ENCODE measurements at regions of chr3 and their contacts with region 1.

Region 1: GRCh38 chr3:169149349-169149890 is 514.1 kb downstream of the MECOM start:
- DNase-seq: peak; percentile 80 to 89
- H3K4me3 ChIP-seq: peak overlapping the region; percentile 29
- H3K4me3 Mint-ChIP-seq: peak overlapping the region; percentile 84
- H3K27ac Mint-ChIP-seq: no peak overlapping the region
- H3K4me1 ChIP-seq: no peaks in the 10 kb centered on the region
- H3K4me1 Mint-ChIP-seq: peaks cover 11% of the 10 kb centered on the region
- H3K27me3 ChIP-seq: no peaks in the 10 kb centered on the region
- H3K27me3 Mint-ChIP-seq: no peaks in the 10 kb centered on the region
- CTCF ChIP-seq: peak; percentile 81 to 87

Region 2: GRCh38 chr3:168952551-168952950 is 196.9 kb before region 1 on chr3:
- CTCF ChIA-PET with region 1: no interaction called
- POLR2A ChIA-PET with region 1: no interaction called
- intact Hi-C with region 1: loop called (anchors 5 kb)
- DNase-seq: no peak
- H3K4me3 ChIP-seq: no peak overlapping the region
- H3K4me3 Mint-ChIP-seq: no peak overlapping the region
- H3K27ac Mint-ChIP-seq: no peak overlapping the region
- H3K4me1 ChIP-seq: peaks cover 14% of the 10 kb centered on the region
- H3K4me1 Mint-ChIP-seq: peaks cover 8% of the 10 kb centered on the region
- H3K27me3 ChIP-seq: no peaks in the 10 kb centered on the region
- H3K27me3 Mint-ChIP-seq: no peaks in the 10 kb centered on the region
- CTCF ChIP-seq: no peak

Region 3: GRCh38 chr3:169218314-169218983 is 69.0 kb after region 1 on chr3:
- CTCF ChIA-PET with region 1: interaction called, 11 read pairs
- POLR2A ChIA-PET with region 1: no interaction called
- intact Hi-C with region 1: loop called (anchors 5 kb)
- DNase-seq: peak; percentile 67
- H3K4me3 ChIP-seq: no peak overlapping the region
- H3K4me3 Mint-ChIP-seq: no peak overlapping the region
- H3K27ac Mint-ChIP-seq: no peak overlapping the region
- H3K4me1 ChIP-seq: no peaks in the 10 kb centered on the region
- H3K4me1 Mint-ChIP-seq: no peaks in the 10 kb centered on the region
- H3K27me3 ChIP-seq: no peaks in the 10 kb centered on the region
- H3K27me3 Mint-ChIP-seq: no peaks in the 10 kb centered on the region
- CTCF ChIP-seq: peak; percentile 51 to 79

Region 4: DNA sequence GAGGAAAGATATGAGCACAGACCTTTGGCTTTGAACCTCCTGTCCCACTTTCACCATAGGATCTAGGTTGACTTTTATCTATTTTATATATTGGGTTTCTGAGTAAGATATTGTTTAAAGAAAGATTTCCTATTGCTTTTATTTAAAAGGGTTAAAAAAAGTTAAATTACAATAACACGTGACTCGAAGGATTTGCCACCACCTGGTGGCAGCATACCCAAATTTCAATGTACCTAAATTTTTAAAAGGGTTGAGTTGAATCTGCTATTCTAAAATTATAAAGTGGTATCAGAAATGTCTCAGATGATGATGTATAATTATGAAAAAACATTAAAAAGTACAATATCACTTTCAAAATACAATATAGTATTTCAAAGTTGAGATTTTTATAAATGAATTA is 145.7 kb after region 1 on chr3:
- CTCF ChIA-PET with region 1: interaction called, 4 read pairs
- POLR2A ChIA-PET with region 1: no interaction called
- intact Hi-C with region 1: loop called (anchors 1 kb)
- DNase-seq: peak in 1 of 2 experiments; percentile 23
- H3K4me3 ChIP-seq: no peak overlapping the region
- H3K4me3 Mint-ChIP-seq: no peak overlapping the region
- H3K27ac Mint-ChIP-seq: no peak overlapping the region
- H3K4me1 ChIP-seq: no peaks in the 10 kb centered on the region
- H3K4me1 Mint-ChIP-seq: peaks cover 23% of the 10 kb centered on the region
- H3K27me3 ChIP-seq: no peaks in the 10 kb centered on the region
- H3K27me3 Mint-ChIP-seq: no peaks in the 10 kb centered on the region
- CTCF ChIP-seq: peak; percentile 19 to 43

Region 5: DNA sequence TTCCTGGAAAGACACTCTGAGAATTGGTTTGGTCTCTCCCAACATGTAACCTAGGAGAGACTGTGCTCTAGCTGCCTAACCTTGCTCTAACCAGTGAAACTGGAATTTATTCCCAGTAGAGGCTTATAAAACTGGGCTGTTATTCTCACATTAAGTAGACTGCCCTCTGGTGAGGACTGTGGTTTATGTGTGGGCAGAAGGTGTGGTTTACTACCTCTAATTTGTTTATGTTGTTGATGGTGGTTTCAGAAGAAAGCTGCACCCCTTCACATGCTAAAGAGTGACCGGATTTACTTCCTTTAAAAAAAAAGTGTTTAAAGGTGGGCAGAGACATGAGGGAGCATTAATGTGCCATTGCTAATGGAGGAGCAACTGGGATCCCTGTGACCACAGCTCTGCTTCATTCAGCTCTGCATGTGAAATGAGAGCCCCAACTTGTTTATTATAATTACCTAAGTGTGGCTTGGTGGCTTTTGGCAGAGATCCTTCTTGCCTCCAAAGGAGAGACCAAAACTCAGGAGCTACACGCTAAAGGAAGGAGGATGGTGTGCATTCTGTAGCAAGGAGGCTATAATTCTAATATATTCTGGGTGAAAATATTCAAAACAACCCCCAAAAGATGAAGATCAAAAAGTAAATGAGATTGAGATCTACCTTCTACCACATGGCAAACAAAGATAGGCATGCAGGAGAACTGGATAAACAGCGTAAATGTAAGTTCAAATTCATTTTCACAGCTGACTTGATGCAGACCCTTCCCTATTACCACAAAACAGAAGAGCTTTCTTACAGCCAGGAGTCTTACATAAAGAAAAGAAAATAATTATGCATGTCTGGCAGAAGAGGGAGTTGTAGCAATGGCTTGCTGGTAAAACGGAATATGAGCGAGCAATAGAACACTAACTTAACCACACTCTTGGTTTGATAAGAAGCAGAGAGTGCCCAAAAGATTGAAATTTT is 241.1 kb after region 1 on chr3:
- CTCF ChIA-PET with region 1: interaction called, 8 read pairs
- POLR2A ChIA-PET with region 1: interaction called, 3 read pairs
- intact Hi-C with region 1: loop called (anchors 2 kb)
- DNase-seq: peak in 1 of 2 experiments; percentile 16
- H3K4me3 ChIP-seq: no peak overlapping the region
- H3K4me3 Mint-ChIP-seq: no peak overlapping the region
- H3K27ac Mint-ChIP-seq: peak overlapping the region; percentile 58
- H3K4me1 ChIP-seq: peaks cover 39% of the 10 kb centered on the region
- H3K4me1 Mint-ChIP-seq: peaks cover 33% of the 10 kb centered on the region
- H3K27me3 ChIP-seq: no peaks in the 10 kb centered on the region
- H3K27me3 Mint-ChIP-seq: no peaks in the 10 kb centered on the region
- CTCF ChIP-seq: peak in 1 of 2 experiments; percentile 26

Region 6: DNA sequence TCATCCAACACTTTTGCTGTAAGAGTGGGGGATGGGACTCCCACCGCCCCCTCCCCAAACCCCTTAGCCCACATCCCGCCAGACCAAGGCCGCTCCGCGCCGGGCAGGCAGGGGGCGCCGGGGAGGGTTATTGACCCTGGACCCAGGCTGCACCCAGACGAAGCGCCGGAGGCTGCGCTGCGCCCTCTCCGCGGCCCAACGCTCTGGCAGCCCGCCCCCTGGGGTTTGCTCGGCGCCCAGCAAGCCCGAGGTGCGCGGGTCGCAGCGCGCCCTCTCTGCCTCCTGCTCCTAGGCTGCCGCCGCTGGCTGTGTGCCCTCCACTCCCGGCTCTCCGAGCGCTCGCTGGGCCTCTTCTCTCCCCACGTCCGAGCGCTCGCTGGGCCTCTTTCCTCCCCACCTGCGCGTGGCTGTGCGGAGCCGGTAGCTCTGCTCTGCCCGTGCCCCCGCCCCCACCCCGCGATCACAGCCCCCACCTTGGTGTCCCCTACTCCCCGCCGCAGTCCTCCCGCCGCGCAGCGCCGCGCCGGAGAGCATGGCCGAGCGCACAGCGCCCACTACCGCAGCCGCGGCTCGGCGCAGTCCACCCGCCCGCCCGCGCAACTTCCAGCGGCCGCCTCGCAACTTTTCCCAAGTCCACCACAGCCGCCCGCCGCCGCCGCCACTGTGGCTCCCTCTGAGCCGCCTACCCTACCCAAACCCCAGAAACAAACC is 512.9 kb after region 1 on chr3:
- CTCF ChIA-PET with region 1: interaction called, 19 read pairs
- POLR2A ChIA-PET with region 1: no interaction called
- intact Hi-C with region 1: loop called (anchors 1 kb)
- DNase-seq: peak; percentile 83 to 92
- H3K4me3 ChIP-seq: peak overlapping the region; percentile 54
- H3K4me3 Mint-ChIP-seq: peak overlapping the region; percentile 87
- H3K27ac Mint-ChIP-seq: no peak overlapping the region
- H3K4me1 ChIP-seq: peaks cover 3% of the 10 kb centered on the region; the same call in 1 of the 2 replicates
- H3K4me1 Mint-ChIP-seq: no peaks in the 10 kb centered on the region
- H3K27me3 ChIP-seq: peaks cover 3% of the 10 kb centered on the region
- H3K27me3 Mint-ChIP-seq: peaks cover 11% of the 10 kb centered on the region
- CTCF ChIP-seq: peak; percentile 73 to 77